Stomach (tissue), 19 donors: ENCODE measurements at regions of chr13 and their contacts with region 1.

Region 1: DNA sequence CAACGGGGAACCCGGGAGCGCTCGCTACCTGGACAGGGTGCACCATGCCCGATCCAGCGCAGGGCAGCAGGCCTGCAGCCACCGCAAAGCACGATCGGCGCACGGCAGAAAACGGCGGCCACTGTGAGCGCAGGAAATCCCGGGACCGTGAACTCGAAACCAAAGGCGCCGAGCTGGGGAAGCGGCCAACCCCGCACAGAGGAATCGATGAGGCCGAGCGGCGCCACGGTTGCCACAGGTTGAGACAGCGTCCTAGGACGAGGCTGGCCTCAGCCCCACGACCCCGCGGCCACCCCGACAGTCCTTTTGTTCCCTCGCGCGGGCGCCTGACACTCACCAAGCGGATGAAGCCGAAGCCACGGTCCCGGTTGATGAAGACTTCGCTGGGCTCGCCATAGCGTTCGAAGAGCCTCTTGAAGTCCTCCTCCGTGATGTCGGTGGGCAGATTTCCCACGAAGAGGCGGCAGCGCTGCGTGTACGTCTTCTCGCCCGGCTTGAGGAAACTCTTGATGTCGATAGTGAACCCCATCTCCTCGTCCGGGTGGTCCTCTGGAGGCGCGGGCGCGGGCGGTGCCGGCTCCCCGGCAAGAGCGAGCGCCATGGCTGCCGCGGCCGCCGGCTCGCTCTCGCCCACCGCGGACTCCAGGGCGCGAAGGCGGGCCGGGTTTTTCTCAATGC is 557 bp downstream of the PSPC1 start:
- DNase-seq: peak; percentile 69 to 82
- H3K4me3 ChIP-seq: peak overlapping the region; percentile 67 to 91 (median 84)
- H3K27ac ChIP-seq: peak overlapping the region; percentile 91 to 97 (median 95)
- H3K4me1 ChIP-seq: peaks cover 6 to 15% (median 13%) of the 10 kb centered on the region in 4 donors
- H3K27me3 ChIP-seq: no peaks in the 10 kb centered on the region
- CTCF ChIP-seq: no peak
- EP300 ChIP-seq: no peak
- POLR2A ChIP-seq: no peak

Region 2: GRCh38 chr13:19852766-19853165 is 70.6 kb after region 1 on chr13:
- intact Hi-C with region 1: loop called (anchors 10 kb)
- DNase-seq: no peak
- H3K4me3 ChIP-seq: no peak overlapping the region
- H3K27ac ChIP-seq: no peak overlapping the region
- H3K4me1 ChIP-seq: peaks cover 0 to 14% (median 0%) of the 10 kb centered on the region in 4 donors
- H3K27me3 ChIP-seq: no peaks in the 10 kb centered on the region
- CTCF ChIP-seq: no peak
- EP300 ChIP-seq: no peak
- POLR2A ChIP-seq: no peak